Panc1 (cell line): ENCODE measurements at regions of chr1 and their contacts with region 1.

Region 1: DNA sequence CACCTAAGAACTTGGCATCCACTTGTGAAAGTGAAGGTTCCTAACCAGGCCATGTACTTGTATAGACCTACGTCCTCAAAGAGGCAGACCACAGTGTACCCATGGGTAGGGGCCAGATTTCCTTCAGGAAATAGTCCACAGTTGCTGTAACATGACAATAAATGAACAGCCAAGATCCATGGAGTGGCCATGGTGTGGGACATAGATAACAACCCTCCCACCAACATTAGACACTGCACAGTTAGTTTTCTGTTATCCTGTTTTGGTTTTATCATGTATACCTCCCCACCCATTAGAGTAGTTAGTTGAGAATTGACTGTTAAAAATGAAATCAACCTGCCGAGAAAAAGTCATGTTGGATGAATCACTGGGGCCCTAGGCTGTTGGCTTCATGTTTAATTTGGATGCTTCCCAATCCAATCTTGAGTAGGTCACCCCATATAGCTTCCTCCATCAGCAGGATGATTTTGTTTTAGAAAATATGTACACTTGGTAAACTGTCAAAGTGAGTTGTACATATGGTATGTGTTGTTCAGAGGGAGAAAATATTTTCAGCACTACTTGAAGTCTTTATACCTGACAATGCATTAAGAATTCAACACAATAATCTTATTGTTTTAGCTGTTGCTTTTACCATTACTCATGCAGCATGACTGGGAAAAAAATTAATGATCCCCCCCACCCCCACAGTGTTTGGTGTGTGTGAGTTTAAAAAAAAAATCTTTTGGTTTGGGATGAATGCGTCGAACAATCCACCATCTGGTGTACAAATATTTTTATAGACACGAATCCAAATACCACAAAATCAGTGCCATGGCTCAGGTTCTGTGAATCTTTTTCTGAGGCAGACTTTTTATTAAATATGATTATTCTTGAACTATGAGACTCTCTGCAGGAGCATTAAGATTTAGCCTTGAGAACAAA is 88.3 kb upstream of the ARHGAP29 start:
- DNase-seq: peak; percentile 96
- ATAC-seq: peak; percentile 77
- H3K4me3 ChIP-seq: no peak overlapping the region
- H3K27ac ChIP-seq: peak overlapping the region; percentile 100
- H3K4me1 ChIP-seq: peaks cover 95% of the 10 kb centered on the region
- H3K27me3 ChIP-seq: no peaks in the 10 kb centered on the region
- CTCF ChIP-seq: no peak

Region 2: DNA sequence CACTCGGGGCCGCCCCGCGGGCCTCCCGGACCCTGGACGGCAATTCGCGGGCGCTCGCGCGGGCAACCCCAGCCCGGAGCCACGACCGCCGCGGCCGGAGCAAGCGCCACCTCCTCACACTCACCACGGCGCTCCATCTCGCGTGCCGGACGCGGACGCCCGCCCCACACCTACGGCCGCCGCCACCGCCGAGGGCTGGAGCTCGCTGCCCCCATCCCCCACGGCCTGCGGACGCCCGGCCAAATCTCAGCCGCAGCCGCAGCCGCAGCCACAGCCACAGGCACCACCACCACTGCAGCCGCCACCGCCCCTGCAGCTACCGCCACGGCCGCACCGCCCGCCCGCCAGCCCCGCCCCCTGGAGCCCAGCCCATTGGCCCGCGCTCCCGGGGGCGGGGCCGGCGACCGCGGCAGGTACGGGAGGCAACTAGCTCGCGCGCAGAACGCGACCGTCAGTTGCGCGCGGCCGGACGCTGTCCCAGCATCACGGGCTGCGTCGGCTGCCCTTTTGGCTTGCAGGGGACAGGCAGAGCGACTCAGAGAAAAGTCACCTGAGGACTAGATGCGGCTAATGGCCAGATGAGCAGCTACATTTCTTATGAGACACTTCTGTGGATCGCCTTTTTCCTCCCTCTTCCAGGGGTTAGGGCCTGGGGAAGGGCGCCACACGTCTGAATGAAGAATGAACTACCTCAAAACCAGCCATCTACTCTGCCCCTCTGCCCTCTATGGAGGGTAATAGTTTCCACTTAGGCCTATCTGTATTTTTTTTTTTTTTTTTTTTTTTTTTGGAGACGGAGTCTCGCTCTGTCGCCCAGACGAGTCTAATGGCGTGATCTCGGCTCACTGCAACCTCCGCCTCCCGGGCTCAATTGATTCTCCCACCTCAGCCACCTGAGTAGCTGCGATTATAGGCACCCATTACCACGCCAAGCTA is 88.1 kb before region 1 on chr1 and contains the start of gene ARHGAP29:
- CTCF ChIA-PET with region 1: no interaction called
- POLR2A ChIA-PET with region 1: interaction called, 25 read pairs
- in situ Hi-C with region 1: no loop called
- intact Hi-C with region 1: no loop called
- DNase-seq: no peak
- ATAC-seq: peak; percentile 85
- H3K4me3 ChIP-seq: peak within 1 kb of the TSS; percentile 90 to 98
- H3K27ac ChIP-seq: peak within 1 kb of the TSS; percentile 99
- H3K4me1 ChIP-seq: peaks cover 36% of the 10 kb centered on the region
- H3K27me3 ChIP-seq: no peaks in the 10 kb centered on the region
- CTCF ChIP-seq: no peak
- total RNA-seq, gene ARHGAP29: 197 TPM

Region 3: GRCh38 chr1:94247138-94248094 is 78.2 kb before region 1 on chr1:
- CTCF ChIA-PET with region 1: no interaction called
- POLR2A ChIA-PET with region 1: interaction called, 8 read pairs
- in situ Hi-C with region 1: no loop called
- intact Hi-C with region 1: loop called (anchors 2 kb)
- DNase-seq: no peak
- ATAC-seq: peak; percentile 87
- H3K4me3 ChIP-seq: peak overlapping the region; percentile 66 to 77
- H3K27ac ChIP-seq: peak overlapping the region; percentile 99
- H3K4me1 ChIP-seq: peaks cover 27% of the 10 kb centered on the region
- H3K27me3 ChIP-seq: no peaks in the 10 kb centered on the region
- CTCF ChIP-seq: no peak